Activated T-helper 2 cell treated with anti-CD3 and anti-CD28 coated beads, Interferon-gamma antibody, Interleukin-2, Interleukin-4, amounts not matched to agents 10 μg/mL and 5 μg/mL and 100 μg/mL, durations not matched to agents 14 hours and 24 hours and 36 hours (primary cell): ENCODE measurements at regions of chr6 and their contacts with region 1.

Region 1: DNA sequence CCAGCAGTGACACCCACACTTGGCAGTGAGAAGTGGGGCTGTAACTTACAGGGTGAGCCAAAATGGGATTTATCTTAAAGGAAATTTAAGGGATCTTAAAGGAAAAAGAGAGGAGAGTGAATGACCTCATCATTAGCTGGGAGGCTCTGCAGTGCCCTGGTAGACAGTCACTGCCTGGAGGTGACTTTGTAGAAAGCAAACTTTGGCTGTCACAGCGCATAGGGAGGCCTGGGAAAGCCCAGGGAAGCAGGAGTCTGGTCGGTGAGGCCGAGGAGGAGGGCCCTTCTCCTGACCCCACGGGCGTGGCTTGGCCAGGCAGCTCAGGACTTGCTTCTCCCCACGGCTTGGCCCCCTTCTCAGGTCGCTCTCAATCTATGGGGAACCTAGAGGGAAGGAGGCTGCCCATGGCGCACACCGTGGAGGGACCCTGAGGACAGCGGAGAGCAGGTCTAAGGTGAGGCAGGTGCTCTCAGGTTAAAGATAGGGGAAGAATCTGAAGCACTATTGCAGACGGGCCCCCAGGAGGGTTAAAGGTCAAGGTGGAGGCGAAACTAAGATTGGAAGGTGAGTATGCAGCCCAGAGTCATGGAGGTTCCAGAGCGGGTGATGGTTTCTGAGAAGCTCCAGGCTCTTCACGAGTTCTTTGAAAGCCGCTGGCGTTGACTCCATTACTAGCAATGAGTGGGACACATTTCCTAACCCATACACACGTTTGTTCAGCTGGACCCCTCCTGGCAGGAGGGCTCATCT is 15.6 kb upstream of the RIPK1 start:
- DNase-seq: no peak
- H3K4me3 Mint-ChIP-seq: peak overlapping the region; percentile 73
- H3K27ac Mint-ChIP-seq: peak overlapping the region; percentile 68
- H3K4me1 Mint-ChIP-seq: peaks cover 27% of the 10 kb centered on the region
- H3K27me3 Mint-ChIP-seq: peaks cover 10% of the 10 kb centered on the region

Region 2: GRCh38 chr6:3023663-3024483 is 28.8 kb before region 1 on chr6:
- intact Hi-C with region 1: loop called (anchors 1 kb)
- DNase-seq: peak; percentile 87
- H3K4me3 Mint-ChIP-seq: peak overlapping the region; percentile 90
- H3K27ac Mint-ChIP-seq: peak overlapping the region; percentile 96
- H3K4me1 Mint-ChIP-seq: peaks cover 59% of the 10 kb centered on the region
- H3K27me3 Mint-ChIP-seq: no peaks in the 10 kb centered on the region